Posterior vena cava (tissue), 2 donors: ENCODE measurements at regions of chr1 and their contacts with region 1.

Region 1: GRCh38 chr1:157595356-157595755 is 2.5 kb downstream of the FCRL4 start:
- DNase-seq: no peak

Region 2: DNA sequence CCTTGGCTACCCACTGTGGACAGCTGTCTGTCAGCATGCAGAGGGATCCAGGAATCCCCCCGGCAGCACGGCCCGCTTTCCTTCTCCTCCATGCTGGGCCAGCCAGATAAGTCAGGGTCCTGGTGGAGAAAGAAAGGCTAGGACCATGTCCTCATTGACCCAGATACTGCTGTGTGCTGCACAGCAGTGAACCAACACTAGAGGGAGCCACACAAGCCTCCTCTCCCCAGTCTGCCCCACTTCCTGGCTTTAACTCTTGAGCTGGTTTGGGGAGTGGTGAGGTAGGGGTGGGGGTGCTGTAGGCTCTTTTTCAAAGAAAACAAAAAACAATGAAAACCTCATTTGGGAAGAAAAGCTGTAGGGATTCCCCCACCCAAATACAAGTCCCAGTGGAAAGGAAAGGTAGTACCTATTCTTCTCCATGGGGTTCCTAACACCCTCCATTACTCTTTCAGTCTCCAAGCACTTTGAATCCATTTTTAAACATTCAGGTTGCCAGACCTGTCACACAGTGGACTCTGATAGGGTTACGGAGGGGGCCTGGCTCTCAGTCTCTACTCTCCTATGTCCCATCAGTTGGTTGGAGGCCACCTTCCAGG is 500.5 kb after region 1 on chr1:
- intact Hi-C with region 1: loop called in 1 of 2 experiments (anchors 10 kb)
- DNase-seq: no peak